ENCODE measurements at regions of chr22 and their contacts with region 1.

Region 1: GRCh38 chr22:22959147-22959827 is 71.7 kb downstream of the IGLL5 start:
- DNase-seq: peak in 2 of 3 donors; percentile 67 to 95
- ATAC-seq: peak; percentile 78
- H3K4me3 ChIP-seq: no peak overlapping the region
- H3K4me1 ChIP-seq: no peaks in the 10 kb centered on the region
- CTCF ChIP-seq: peak; percentile 62

Region 2: GRCh38 chr22:22855617-22856308 is 103.5 kb before region 1 on chr22:
- intact Hi-C with region 1: loop called in 1 of 2 experiments (anchors 5 kb)
- DNase-seq: peak in 2 of 3 donors; percentile 33 to 48
- ATAC-seq: peak; percentile 62
- H3K4me3 ChIP-seq: no peak overlapping the region
- H3K4me1 ChIP-seq: no peaks in the 10 kb centered on the region
- CTCF ChIP-seq: peak; percentile 7

Region 3: GRCh38 chr22:23128269-23129108 is 169.2 kb after region 1 on chr22:
- intact Hi-C with region 1: loop called (anchors 2 to 10 kb)
- DNase-seq: peak in 2 of 3 donors; percentile 70 to 81
- ATAC-seq: peak; percentile 86
- H3K4me3 ChIP-seq: no peak overlapping the region
- H3K4me1 ChIP-seq: no peaks in the 10 kb centered on the region
- CTCF ChIP-seq: peak; percentile 29

Region 4: GRCh38 chr22:23205339-23206049 is 246.2 kb after region 1 on chr22:
- intact Hi-C with region 1: no loop called
- DNase-seq: no peak
- ATAC-seq: no peak
- H3K4me3 ChIP-seq: no peak overlapping the region
- H3K4me1 ChIP-seq: no peaks in the 10 kb centered on the region
- CTCF ChIP-seq: no peak

Measured in mucosa of descending colon (tissue), 3 donors.